Endothelial cell of umbilical vein (primary cell): ENCODE measurements at regions of chrX and their contacts with region 1.

Region 1: DNA sequence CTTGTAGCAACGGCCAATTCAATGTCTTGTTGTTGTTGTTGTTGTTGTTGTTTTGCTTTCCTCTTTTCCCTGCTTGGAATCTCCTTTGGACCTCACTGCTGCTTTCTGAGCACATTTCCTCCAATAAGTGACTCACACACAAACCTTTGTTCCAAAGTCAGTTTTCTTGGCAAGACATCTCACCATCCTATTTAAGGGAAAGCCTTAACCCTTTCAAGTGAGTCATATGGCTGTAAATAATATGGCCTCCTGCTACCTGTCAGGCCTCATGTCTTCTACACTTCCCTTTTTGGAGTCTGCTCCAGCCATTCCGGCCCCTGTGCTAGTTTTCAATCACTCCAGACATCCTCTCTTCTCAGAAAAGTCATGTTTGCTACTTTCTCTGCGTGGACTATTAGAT is 79.5 kb upstream of the MAGEB10 start:
- DNase-seq: peak; percentile 81
- H3K4me3 ChIP-seq: no peak overlapping the region
- H3K27ac ChIP-seq: peak overlapping the region; percentile 1
- H3K4me1 ChIP-seq: peaks cover 9% of the 10 kb centered on the region
- H3K27me3 ChIP-seq: no peaks in the 10 kb centered on the region
- CTCF ChIP-seq: no peak
- POLR2A ChIP-seq: no peak

Region 2: GRCh38 chrX:27565992-27566391 is 162.3 kb before region 1 on chrX:
- CTCF ChIA-PET with region 1: no interaction called
- POLR2A ChIA-PET with region 1: no interaction called
- dilution Hi-C with region 1: no loop called
- intact Hi-C with region 1: no loop called
- DNase-seq: peak; percentile 94
- H3K4me3 ChIP-seq: no peak overlapping the region
- H3K27ac ChIP-seq: peak overlapping the region; percentile 96
- H3K4me1 ChIP-seq: peaks cover 15% of the 10 kb centered on the region
- H3K27me3 ChIP-seq: no peaks in the 10 kb centered on the region
- CTCF ChIP-seq: no peak
- POLR2A ChIP-seq: no peak

Region 3: DNA sequence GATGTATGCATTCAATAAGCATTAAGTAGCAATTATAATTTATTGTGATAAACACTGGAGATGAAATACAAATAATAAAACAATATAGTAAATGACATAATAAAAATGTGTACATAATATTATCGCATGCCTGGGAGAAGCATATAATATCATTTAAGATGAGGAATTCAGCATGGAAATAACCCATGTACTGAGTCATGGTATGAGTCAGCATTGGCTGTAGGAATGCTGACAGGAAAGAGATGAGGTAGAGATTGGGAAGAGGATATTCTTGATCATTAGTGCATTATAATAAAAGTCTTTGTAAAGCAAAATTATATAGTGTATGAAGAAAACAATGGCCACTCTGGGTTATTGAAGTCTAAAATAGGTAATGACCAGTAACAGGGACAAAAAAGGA is 162.3 kb after region 1 on chrX:
- CTCF ChIA-PET with region 1: no interaction called
- POLR2A ChIA-PET with region 1: no interaction called
- dilution Hi-C with region 1: no loop called
- intact Hi-C with region 1: loop called (anchors 5 kb)
- DNase-seq: peak; percentile 80
- H3K4me3 ChIP-seq: no peak overlapping the region
- H3K27ac ChIP-seq: peak overlapping the region; percentile 80
- H3K4me1 ChIP-seq: peaks cover 14% of the 10 kb centered on the region
- H3K27me3 ChIP-seq: no peaks in the 10 kb centered on the region
- CTCF ChIP-seq: no peak
- POLR2A ChIP-seq: no peak